Right ventricle myocardium superior (tissue), 1 donor: ENCODE measurements at regions of chr10 and their contacts with region 1.

Region 1: GRCh38 chr10:102802920-102803534 is 34.2 kb downstream of the CYP17A1 start:
- DNase-seq: no peak
- ATAC-seq: peak; percentile 41

Region 2: DNA sequence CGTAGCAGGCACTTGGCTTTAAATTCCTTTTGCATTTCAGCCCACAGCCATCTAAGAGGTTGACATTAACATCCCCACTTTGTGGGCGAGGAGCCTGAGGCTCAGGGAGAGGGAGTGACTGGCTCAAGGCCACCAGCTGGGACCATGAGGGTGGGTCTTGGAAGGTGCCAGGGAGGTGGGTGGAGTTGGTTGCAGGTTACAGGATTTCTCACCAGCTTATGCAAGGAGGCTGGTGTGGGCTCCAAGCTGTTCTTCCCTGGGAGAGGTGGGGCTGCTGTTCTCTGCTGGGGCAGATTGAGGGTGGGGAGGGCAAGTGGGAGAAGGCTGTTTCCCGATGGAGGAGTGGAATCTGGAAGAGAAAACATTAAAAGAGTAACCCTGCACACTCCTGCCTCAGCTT is 337.6 kb before region 1 on chr10:
- intact Hi-C with region 1: no loop called
- DNase-seq: no peak
- ATAC-seq: no peak

Region 3: DNA sequence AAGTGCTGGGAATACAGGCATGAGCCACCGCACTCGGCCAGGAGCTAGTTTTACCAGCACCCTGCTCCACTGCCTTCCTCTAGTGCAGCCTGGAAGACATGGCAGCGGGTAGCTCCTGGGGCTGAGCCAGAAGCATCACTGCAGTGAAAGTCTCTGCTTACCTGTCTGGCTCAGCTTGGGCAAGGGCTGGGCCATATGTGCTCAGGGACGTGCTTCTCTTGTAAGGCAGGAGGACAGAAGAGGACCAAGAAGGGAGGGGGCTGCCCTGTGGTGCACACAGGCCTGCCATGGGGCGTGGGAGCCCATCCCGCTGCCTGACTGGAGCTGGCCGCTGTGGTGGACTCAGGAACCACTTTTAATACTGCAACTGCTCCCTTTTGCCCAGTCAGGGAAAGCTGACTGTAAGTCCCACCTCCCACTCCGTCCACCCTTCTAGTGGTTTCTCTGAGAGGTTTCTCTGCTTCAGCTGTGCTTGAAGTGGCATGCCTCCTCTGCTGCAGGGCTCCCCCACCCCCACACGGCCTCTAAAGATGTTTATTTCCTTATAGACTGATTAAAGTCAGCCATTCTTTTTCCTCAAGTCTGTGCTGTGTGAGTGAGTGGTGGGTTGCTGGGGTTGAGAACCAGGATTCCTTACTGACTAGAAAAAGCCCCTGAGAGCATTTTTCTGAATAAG is 326.4 kb before region 1 on chr10:
- intact Hi-C with region 1: no loop called
- DNase-seq: no peak
- ATAC-seq: no peak

Region 4: GRCh38 chr10:102752934-102753664 is 49.9 kb before region 1 on chr10:
- intact Hi-C with region 1: loop called (anchors 5 kb)
- DNase-seq: no peak
- ATAC-seq: peak; percentile 86